ENCODE measurements at regions of chr17 and their contacts with region 1.

Region 1: DNA sequence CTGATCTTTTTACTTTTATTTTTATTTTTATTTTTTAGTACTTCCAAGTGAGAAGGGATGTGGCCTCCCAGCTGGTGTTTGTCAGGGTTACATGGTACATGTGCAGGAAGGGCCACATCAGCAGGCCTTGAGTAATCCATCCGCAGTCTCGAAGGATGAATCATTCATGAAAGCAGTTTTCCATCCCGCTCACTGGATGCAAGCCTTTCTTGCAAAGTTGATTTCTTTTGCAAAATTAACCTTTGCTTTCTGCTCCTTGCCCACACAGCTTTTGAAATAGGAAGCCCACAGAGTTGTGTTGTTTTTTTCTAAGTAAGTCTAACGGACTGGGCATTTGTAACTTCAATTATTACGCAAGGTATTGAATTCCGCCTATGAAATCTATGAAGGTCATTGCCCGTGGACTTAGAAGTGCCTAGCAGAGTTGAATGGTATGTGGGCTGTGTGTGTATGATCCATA is 157.4 kb downstream of the PRKCA start:
- DNase-seq: peak; percentile 88
- H3K4me3 ChIP-seq: no peak overlapping the region
- H3K27me3 ChIP-seq: no peaks in the 10 kb centered on the region
- CTCF ChIP-seq: no peak

Region 2: GRCh38 chr17:65056262-65056638 is 1403.6 kb before region 1 on chr17:
- CTCF ChIA-PET with region 1: no interaction called
- POLR2A ChIA-PET with region 1: interaction called, 14 read pairs
- DNase-seq: no peak
- H3K4me3 ChIP-seq: peak overlapping the region; percentile 98
- H3K27me3 ChIP-seq: no peaks in the 10 kb centered on the region
- CTCF ChIP-seq: no peak

Region 3: DNA sequence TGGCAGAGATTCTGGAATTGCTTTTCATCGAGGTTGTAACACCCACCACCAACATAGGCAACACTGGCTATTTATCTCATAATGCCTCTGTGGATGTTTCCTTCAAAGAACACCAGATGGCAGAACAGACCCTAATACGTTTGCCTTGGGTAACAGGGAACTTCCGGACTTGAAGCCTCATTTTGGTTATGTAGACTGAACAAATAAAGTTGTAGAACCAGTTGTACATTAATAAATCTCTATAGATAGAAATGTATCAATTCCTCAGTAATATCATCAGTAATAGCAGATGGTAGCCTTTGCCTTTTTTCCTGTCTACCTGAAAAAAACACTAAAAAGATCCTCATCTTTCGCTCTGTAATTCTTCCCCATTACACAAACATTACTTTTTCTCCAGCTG is 204.7 kb before region 1 on chr17:
- CTCF ChIA-PET with region 1: no interaction called
- POLR2A ChIA-PET with region 1: no interaction called
- DNase-seq: no peak
- H3K4me3 ChIP-seq: no peak overlapping the region
- H3K27me3 ChIP-seq: no peaks in the 10 kb centered on the region
- CTCF ChIP-seq: peak; percentile 70

Measured in BJ (cell line).